ENCODE measurements at regions of chr21 and their contacts with region 1.

Region 1: DNA sequence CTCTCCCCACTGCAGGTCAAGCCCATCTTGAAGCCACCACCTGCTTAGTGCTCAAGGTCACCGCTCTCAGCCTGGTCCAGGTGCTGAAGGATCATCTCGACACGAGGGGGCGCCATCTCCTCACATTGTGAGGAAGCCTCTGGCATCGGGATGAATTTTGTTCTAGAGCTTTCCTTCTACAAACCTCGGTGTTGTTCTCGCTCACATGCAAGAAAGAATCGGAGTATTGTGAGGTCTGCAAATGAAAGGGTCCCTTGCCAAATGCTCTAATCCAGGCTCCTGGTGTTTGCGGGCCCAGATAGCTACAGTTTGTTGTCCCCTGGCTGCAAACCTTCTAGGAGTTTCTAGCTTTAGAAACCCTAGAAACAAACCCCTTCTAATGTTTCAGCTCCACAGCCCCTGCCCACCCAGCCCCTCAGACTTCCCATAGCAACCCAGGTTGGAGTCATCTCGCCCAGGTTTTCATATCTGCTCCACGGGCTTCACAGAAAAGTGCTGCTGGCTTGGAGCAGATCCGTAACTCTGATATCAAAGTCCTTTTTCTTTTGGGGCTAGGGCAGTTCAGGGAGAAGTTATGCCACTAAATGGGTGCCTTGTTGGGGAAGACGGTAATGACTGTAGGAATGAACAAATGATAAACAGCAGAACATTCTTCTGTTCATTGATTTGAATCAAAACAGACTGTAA is 8.6 kb upstream of the ATP5PO start:
- DNase-seq: peak; percentile 71 to 94 (median 86)
- ATAC-seq: peak; percentile 99
- H3K4me3 ChIP-seq: no peak overlapping the region
- H3K27ac ChIP-seq: no peak overlapping the region
- H3K4me1 ChIP-seq: peaks cover 4% of the 10 kb centered on the region in 2 donors
- H3K27me3 ChIP-seq: no peaks in the 10 kb centered on the region
- CTCF ChIP-seq: peak; percentile 89 to 90

Region 2: DNA sequence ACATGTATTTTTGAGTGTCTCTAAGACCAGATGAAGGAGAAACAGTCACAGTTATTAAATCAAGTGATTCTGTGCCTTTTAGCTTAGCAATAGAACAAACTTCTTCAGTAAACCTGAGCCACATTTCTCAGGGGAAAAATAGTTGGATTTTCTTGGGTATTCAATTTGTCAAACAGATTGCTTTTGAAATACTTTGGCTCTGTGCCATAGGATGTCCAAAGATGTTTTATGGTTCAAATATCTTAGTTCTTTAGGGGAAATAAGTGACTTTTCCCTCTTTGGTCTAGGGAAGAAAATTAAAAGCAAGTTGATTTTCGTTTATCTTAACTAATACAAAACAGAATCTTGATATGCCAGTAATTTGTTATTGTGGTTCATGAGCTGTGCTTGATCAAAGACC is 134.5 kb before region 1 on chr21:
- intact Hi-C with region 1: no loop called
- DNase-seq: no peak
- ATAC-seq: no peak
- H3K4me3 ChIP-seq: no peak overlapping the region
- H3K27ac ChIP-seq: no peak overlapping the region
- H3K4me1 ChIP-seq: no peaks in the 10 kb centered on the region
- H3K27me3 ChIP-seq: no peaks in the 10 kb centered on the region
- CTCF ChIP-seq: no peak

Region 3: GRCh38 chr21:34345091-34345871 is 421.1 kb after region 1 on chr21:
- intact Hi-C with region 1: loop called in 1 of 2 experiments (anchors 5 kb)
- DNase-seq: peak in 1 of 4 donors; percentile 76
- ATAC-seq: no peak
- H3K4me3 ChIP-seq: no peak overlapping the region
- H3K27ac ChIP-seq: peak overlapping the region in 1 of 2 donors; percentile 28
- H3K4me1 ChIP-seq: peaks cover 0 to 9% of the 10 kb centered on the region in 2 donors
- H3K27me3 ChIP-seq: no peaks in the 10 kb centered on the region
- CTCF ChIP-seq: no peak

Measured in left lung (tissue), 14 donors.